Dorsolateral prefrontal cortex (tissue), 120 donors: ENCODE measurements at regions of chr1 and their contacts with region 1.

Region 1: DNA sequence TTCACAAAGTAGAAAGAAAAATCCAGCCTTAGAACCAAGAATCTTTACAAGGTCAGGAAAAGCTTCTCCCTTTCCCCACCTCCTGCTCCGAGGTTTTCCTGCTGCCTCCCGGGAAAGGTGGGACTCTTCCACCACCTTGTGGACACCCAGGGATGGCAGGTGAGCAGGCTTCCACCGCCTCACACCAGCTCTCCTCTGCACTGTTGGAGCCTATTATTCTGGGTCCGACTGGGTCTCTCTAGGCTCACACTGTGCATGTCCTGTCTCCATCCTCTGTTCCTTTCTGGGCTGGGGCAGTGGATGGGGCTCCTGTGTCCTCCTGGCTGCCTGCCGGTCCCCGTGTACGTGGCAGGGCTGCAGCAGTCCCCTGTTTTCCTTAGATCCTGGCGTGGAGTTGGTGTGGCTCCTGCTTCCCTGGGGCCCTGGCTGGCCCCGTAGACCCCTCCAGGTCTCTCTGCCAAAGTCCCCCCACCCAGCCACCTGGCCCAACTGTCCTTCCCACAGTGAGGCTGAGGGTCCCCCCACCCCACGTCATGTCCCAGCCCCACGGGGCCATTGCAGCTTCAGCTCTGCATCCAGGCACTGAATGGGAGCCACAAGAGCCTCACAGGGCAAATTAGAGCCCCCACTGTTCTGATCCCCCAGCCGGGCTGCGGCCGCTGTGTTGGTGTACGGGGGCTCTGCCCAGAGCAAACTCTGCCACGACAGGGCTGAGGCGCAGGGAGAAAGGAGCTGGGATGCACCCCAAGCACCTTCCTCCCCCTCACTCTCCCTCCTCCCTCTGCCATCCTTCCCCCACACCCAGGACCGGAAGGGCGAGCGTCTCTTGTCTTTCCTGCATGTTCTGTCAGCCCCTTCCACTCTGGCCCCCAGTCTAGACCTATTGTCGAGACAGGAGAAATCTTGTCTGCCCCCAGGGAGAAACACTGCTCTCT is 3.3 kb upstream of the SLC45A1 start:
- DNase-seq: peak; percentile 42 to 88 (median 76)
- H3K4me3 ChIP-seq: peak overlapping the region in 3 of 59 donors; percentile 4 to 13 (median 10)
- H3K27ac ChIP-seq: peak overlapping the region in 1 of 59 donors; percentile 30
- H3K27me3 ChIP-seq: no peaks in the 10 kb centered on the region
- CTCF ChIP-seq: peak; percentile 34 to 94 (median 80)

Region 2: DNA sequence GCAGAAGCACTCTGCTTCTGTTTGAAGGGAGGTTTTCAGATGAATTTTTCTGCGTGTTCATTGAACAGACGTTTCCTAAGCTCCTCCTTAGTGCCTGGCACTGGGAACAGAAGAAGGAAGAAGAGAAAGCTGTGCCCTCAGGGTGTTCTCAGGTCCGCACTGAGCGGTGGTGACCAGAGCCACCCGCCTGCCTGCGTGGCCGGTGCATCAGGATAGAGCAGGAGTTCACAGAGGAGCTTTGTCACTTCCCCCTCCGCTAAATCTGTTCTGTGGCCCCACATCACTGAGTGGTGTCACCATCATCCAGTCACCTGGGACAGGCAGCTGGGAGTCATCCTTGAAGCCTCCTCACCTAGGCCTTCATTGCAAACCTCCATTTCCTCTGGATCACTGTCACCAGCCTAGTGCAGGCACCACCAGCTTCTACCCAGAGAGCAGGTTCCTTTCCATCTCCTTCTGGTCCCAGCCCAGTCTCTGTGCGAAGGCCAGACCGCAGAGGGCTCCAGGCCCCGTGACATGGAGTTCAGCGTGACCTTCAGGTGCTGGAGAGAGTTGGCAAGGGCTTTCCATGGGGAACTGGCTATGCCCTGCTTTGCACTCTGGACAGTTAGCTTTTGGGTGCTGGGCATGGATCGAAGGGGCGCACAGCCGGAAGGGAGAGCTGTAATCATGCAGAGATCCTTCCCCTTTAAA is 331.4 kb before region 1 on chr1:
- intact Hi-C with region 1: loop called in 1 of 2 experiments (anchors 5 kb)
- DNase-seq: no peak
- H3K4me3 ChIP-seq: no peak overlapping the region
- H3K27ac ChIP-seq: peak overlapping the region in 10 of 59 donors; percentile 4 to 53 (median 22)
- H3K27me3 ChIP-seq: no peaks in the 10 kb centered on the region
- CTCF ChIP-seq: no peak

Region 3: DNA sequence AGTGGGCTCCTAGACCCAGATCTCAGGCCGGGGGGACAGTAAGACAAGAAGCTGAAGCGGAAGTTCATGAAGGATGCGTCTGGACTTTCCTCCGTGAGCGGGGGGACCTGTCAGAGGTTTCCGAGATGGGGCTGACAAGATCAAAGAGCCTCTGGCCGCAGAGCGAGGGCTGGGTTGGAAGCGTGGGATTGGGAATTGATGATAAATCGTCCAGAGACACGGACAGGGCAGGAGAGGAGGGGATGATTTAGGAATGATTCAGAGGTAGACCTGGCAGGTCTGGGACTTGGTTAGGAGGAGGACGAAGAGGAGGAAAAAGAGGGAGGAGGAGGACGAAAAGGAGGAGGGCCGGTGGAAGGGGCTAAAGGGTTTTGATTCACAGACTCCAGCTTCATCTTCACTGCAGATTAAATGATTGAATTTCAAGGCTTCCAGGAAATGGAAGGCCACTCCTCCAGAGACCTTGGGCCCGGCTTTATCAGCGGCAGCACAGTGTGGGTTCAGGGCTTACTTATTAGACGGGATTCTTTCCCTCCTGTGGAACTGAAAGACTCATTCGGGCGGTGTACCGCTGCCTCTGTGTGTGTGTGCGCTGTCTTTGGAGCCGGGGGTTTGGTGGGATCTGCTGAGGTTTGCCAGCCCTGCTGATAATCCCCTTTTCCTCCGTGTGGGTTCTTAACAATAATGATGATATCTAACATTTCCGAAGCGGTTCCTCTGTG is 82.4 kb before region 1 on chr1:
- intact Hi-C with region 1: no loop called
- DNase-seq: no peak
- H3K4me3 ChIP-seq: no peak overlapping the region
- H3K27ac ChIP-seq: no peak overlapping the region
- H3K27me3 ChIP-seq: peaks cover 0 to 4% (median 0%) of the 10 kb centered on the region in 45 donors
- CTCF ChIP-seq: no peak

Region 4: DNA sequence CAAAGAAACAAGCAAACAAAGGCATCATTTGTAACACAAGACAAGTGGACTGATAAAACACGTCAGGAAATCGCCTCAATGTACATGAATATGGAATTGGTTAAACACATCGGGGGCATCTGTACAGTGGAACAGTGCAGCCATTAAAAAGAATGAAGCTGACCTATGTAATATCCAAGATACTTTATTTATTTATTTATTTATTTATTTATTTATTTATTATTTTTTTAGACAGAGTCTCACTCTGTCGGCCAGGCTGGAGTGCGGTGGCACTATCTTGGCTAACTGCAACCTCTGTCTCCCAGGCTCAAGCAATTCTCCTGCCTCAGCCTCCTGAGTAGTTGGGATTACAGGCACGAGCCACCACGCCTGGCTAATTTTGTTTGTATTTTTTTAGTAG is 72.1 kb before region 1 on chr1:
- intact Hi-C with region 1: no loop called
- DNase-seq: no peak
- H3K4me3 ChIP-seq: no peak overlapping the region
- H3K27ac ChIP-seq: no peak overlapping the region
- H3K27me3 ChIP-seq: no peaks in the 10 kb centered on the region
- CTCF ChIP-seq: no peak

Region 5: GRCh38 chr1:8525558-8526275 is 211.1 kb after region 1 on chr1:
- intact Hi-C with region 1: no loop called
- DNase-seq: peak; percentile 58 to 95 (median 90)
- H3K4me3 ChIP-seq: peak overlapping the region; percentile 45 to 93 (median 74)
- H3K27ac ChIP-seq: peak overlapping the region; percentile 57 to 98 (median 92)
- H3K27me3 ChIP-seq: no peaks in the 10 kb centered on the region
- CTCF ChIP-seq: peak in 23 of 56 donors; percentile 4 to 49 (median 22)